ENCODE measurements at regions of chr15 and their contacts with region 1.

Region 1: GRCh38 chr15:25933456-25934158 is 70.5 kb upstream of the ATP10A start:
- DNase-seq: peak; percentile 38
- H3K4me3 ChIP-seq: peak overlapping the region; percentile 28; the same call in 1 of the 2 replicates
- H3K27me3 ChIP-seq: no peaks in the 10 kb centered on the region
- CTCF ChIP-seq: peak; percentile 92

Region 2: GRCh38 chr15:25684521-25685431 is 248.8 kb before region 1 on chr15:
- CTCF ChIA-PET with region 1: interaction called, 11 read pairs
- POLR2A ChIA-PET with region 1: no interaction called
- DNase-seq: peak; percentile 68
- H3K4me3 ChIP-seq: no peak overlapping the region
- H3K27me3 ChIP-seq: no peaks in the 10 kb centered on the region
- CTCF ChIP-seq: no peak

Region 3: DNA sequence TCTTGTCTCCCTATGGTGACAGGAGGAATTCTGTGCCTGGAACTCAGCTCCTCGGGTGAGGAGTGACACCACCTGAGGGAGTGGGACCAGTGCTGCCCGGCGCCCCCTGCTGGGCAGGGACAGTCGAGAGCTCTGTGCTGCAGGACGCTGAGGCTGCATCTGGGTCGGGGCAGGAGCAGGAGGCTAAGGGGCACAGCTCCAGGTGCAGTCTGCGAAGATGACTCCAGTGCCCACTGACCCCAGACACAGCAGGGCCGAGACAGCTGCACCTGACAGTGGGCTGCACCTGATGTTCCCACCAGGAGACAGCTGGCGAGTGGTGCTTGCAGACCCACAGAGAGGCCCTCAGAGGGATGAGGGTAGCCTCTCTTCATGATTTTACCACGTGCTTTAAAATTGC is 223.4 kb before region 1 on chr15:
- CTCF ChIA-PET with region 1: interaction called, 11 read pairs
- POLR2A ChIA-PET with region 1: no interaction called
- DNase-seq: no peak
- H3K4me3 ChIP-seq: no peak overlapping the region
- H3K27me3 ChIP-seq: no peaks in the 10 kb centered on the region
- CTCF ChIP-seq: peak; percentile 78

Region 4: DNA sequence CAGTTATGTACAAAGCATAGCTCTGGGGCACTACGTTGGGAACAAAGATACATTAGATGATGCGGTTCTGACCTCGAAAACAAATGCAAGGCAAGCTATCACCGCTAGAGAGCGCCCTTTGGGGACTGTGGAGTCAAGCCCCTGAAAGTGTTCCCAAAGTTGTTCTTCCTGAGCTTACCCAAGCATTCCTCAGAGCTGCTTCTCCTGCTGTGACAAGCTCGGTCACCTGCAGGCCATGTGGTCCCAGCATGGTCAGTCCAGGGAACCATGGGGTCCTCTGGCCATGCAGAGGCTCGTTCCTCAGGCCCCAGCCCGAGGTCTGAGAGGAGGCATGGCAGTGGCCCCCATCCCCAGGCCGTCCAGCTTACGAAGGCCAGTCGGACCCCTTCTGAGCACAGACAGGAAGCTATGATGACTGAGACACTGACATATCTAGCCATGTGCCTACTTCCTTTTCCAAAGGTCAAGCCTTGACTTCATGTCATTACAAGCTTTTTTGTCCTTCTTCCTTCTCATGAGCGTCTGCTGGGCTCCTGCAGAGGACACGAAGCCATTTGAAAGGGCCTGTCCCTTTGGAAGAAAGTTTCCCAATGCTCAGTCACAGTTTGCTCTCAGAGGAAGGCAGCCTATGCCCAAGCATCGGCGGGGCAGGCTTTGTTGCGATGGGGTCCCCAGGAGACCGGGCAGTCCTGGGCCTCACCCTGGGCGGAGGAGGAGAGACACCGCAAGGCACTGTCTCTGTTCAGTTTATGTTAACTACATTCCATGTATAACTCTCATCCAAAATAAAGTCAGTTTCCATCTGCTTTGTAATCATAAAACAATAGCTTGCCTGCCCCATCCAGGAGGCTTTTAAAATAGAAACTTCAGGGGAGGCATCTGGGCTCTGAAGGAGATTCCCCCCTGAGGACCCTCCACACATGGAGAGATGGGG is 149.7 kb before region 1 on chr15:
- CTCF ChIA-PET with region 1: interaction called, 14 read pairs
- POLR2A ChIA-PET with region 1: no interaction called
- DNase-seq: no peak
- H3K4me3 ChIP-seq: no peak overlapping the region
- H3K27me3 ChIP-seq: no peaks in the 10 kb centered on the region
- CTCF ChIP-seq: peak; percentile 53

Region 5: GRCh38 chr15:25863111-25863967 is 70.3 kb before region 1 on chr15 and contains the start of gene ATP10A:
- CTCF ChIA-PET with region 1: interaction called, 19 read pairs
- POLR2A ChIA-PET with region 1: no interaction called
- DNase-seq: no peak
- H3K4me3 ChIP-seq: peak within 1 kb of the TSS; percentile 71
- H3K27me3 ChIP-seq: no peaks in the 10 kb centered on the region
- CTCF ChIP-seq: no peak
- polyA plus RNA-seq, gene ATP10A: 20.4 and 28.0 TPM in 2 replicates

Region 6: GRCh38 chr15:25883463-25884259 is 49.9 kb before region 1 on chr15:
- CTCF ChIA-PET with region 1: interaction called, 11 read pairs
- POLR2A ChIA-PET with region 1: no interaction called
- DNase-seq: peak; percentile 79
- H3K4me3 ChIP-seq: no peak overlapping the region
- H3K27me3 ChIP-seq: no peaks in the 10 kb centered on the region
- CTCF ChIP-seq: no peak